ENCODE measurements at regions of chr2 and their contacts with region 1.

Region 1: DNA sequence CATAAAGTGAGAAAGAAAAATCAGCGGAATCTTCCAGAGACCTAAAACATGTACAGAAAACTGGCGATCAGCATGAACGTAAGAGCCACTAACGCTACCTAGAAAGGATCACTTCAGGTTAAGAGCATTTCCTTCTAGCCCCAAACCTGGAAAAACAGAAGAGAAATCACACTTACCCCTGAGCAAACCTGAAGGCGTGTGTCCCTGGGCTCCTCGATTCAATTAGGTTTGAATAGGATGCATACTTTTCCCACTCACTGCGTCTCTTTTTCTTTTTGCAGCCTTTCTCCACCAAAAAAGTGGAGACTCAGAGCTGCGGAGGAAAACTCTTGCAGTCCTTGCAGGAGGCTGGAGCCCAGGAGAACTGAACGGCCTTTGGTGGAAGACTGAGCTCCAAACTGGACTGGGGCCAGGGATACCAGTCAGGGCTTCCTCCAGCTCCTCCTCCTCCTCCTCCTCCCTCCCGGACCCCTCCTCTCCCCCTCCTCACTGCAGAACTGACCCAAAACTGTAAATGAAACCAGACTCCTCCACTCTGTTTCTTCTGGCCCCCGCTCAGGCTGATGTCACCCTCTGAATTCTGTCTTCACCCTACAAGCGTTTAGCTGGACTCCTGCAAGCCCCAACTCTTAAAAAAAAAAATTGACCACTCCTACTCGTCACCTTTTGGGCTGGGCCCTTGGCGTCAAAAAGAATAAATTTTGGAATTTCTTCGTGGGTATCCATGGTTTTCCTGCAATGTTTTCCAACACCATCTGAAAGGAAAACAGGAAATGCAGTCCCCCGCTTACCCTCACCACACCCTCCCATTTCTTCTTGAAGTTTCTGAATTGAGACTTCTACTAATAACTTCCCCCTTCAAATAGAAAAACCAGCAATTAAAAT is at the start of gene COL6A3:
- DNase-seq: peak; percentile 56
- H3K4me3 ChIP-seq: peak within 1 kb of the TSS; percentile 24
- H3K27ac ChIP-seq: peak within 1 kb of the TSS; percentile 57
- H3K4me1 ChIP-seq: no peaks in the 10 kb centered on the region
- H3K27me3 ChIP-seq: no peaks in the 10 kb centered on the region
- CTCF ChIP-seq: no peak
- total RNA-seq, gene COL6A3: 28.4 to 80.9 TPM

Region 2: GRCh38 chr2:237161189-237161588 is 252.8 kb before region 1 on chr2:
- intact Hi-C with region 1: loop called (anchors 5 kb)
- DNase-seq: no peak
- H3K4me3 ChIP-seq: no peak overlapping the region
- H3K27ac ChIP-seq: peak overlapping the region; percentile 17
- H3K4me1 ChIP-seq: no peaks in the 10 kb centered on the region
- H3K27me3 ChIP-seq: no peaks in the 10 kb centered on the region
- CTCF ChIP-seq: no peak

Region 3: GRCh38 chr2:237886685-237887481 is 472.9 kb after region 1 on chr2:
- intact Hi-C with region 1: no loop called
- DNase-seq: no peak
- H3K4me3 ChIP-seq: no peak overlapping the region
- H3K27ac ChIP-seq: no peak overlapping the region
- H3K4me1 ChIP-seq: no peaks in the 10 kb centered on the region
- H3K27me3 ChIP-seq: no peaks in the 10 kb centered on the region
- CTCF ChIP-seq: no peak

Measured in colonic mucosa (tissue), 4 donors.